Transverse colon (tissue), 4 donors: ENCODE measurements at regions of chr1 and their contacts with region 1.

Region 1: DNA sequence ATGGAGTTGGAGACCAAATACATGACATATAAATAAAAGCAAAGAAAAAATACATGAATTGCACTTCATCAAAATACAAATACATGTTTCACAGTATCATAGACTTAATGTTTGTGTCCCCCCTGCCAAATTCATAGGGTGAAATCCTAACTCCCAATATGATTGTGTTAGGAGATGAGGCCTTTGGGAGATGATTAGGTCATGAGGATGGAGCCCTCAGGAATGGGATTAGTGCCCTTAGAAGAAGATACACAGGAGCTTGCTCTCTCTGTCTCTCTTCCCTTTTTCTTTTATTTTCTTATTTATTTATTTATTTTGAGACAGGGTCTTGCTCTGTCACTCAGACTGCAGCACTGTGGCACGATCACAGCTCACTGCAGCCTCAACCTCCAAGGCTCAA is 26.0 kb upstream of the FAM131C start:
- DNase-seq: no peak
- H3K4me3 ChIP-seq: no peak overlapping the region
- H3K27ac ChIP-seq: no peak overlapping the region
- H3K4me1 ChIP-seq: no peaks in the 10 kb centered on the region
- H3K27me3 ChIP-seq: peaks cover 5% of the 10 kb centered on the region
- CTCF ChIP-seq: no peak
- EP300 ChIP-seq: no peak
- POLR2A ChIP-seq: no peak

Region 2: DNA sequence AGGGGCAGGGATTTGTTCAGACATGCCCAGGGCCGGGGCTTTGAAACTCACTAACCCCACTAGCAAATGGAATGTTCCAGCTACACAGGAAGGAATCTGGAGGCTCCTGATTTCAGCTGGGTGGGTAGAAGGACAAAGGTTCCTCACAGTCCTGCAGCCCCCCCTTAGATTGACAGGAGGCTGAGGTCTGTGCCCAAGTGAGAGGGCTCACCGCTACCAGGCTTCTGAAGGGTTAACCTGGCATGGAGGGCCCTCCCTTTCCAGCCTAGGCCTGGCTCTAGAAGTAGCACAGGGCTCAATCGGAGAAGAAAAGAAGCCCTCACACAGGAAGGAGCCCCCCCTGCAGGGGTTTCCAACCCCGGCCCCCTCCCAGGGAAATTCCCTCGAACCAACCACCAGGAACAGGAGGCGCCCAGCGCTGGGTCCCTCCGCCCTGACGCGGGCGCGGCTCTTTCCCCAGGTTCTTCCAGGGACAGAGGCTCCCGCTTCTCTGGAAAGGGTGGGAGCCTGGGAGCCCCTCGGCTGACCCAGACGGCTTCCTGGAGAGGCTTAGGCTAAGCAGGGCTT is 53.2 kb after region 1 on chr1:
- in situ Hi-C with region 1: no loop called
- intact Hi-C with region 1: loop called (anchors 2 kb)
- DNase-seq: peak; percentile 63
- H3K4me3 ChIP-seq: peak overlapping the region in 1 of 4 donors; percentile 80
- H3K27ac ChIP-seq: peak overlapping the region; percentile 85 to 95 (median 91)
- H3K4me1 ChIP-seq: peaks cover 21 to 51% (median 31%) of the 10 kb centered on the region in 4 donors
- H3K27me3 ChIP-seq: no peaks in the 10 kb centered on the region
- CTCF ChIP-seq: no peak
- EP300 ChIP-seq: no peak
- POLR2A ChIP-seq: no peak

Region 3: GRCh38 chr1:16386454-16387113 is 287.2 kb after region 1 on chr1:
- in situ Hi-C with region 1: no loop called
- intact Hi-C with region 1: no loop called
- DNase-seq: no peak
- H3K4me3 ChIP-seq: no peak overlapping the region
- H3K27ac ChIP-seq: peak overlapping the region; percentile 58 to 60 (median 58)
- H3K4me1 ChIP-seq: peaks cover 13 to 59% (median 34%) of the 10 kb centered on the region in 4 donors
- H3K27me3 ChIP-seq: no peaks in the 10 kb centered on the region
- CTCF ChIP-seq: no peak
- EP300 ChIP-seq: no peak
- POLR2A ChIP-seq: no peak

Region 4: DNA sequence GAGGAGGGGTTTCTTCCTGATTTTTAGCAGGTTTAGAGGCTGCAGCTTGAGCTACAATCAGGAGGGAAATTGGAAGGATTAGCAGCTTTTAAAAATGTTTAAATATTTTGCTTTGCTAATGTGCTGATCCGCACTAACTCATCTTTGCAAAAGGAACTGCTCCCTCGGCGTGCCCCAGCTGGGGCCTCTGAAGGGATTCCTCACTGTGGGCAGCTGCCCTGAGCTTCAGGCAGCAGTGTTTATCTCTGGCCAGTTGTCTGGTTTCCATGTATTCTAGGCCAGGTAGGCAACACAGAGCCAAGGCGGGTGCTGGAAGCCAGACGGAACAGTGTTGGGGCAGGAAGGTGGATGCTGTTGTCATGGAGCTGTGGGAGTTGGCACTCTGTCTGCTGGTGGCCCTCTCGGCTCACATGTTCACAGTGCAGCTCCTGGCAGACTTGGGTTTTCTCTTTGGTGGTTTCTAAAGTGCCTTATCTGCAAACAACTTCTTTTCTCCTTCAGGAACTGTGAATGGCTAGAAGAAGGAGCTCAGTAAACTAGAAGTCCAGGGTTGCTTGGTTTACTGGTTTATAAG is 360.0 kb after region 1 on chr1:
- in situ Hi-C with region 1: no loop called
- intact Hi-C with region 1: no loop called
- DNase-seq: no peak
- H3K4me3 ChIP-seq: no peak overlapping the region
- H3K27ac ChIP-seq: no peak overlapping the region
- H3K4me1 ChIP-seq: peaks cover 0 to 5% (median 0%) of the 10 kb centered on the region in 4 donors
- H3K27me3 ChIP-seq: no peaks in the 10 kb centered on the region
- CTCF ChIP-seq: no peak
- EP300 ChIP-seq: no peak
- POLR2A ChIP-seq: no peak

Region 5: DNA sequence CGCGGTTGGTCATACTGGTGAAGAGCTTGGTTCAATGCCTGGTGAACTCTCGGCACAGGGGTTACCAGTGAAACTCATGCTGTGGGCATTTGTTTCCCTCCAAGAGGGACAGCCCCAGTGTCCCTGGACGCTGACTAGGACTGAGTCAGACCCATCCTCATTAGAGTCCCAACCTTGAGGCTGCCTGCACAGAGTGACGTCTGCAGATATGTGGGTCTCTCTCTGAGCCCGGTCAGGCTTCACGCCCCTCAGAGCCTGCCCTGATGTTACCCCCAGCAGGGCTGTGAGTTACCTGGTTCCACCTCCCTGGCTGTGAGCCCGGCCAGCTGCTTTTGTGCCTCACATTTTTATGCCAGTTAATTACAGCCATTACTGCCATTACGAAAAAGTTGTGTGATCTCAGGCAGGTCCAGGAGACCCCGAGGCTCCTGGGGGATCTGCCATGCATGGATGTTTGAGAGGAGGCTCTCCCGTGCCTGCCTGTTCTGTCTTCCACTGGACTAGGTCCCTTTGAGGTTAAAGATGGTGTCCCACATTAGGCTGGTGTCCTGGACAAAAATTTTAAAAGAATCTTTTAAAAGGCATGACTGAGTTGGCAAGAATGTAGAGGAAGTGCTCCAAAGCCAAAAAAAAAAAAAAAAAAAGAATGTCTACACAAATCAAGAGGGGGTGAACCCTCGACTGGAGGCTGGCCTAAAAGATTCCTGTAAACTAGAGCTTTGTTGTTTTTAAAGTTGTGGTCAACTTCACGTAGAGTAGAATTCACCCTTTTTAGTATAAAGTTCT is 1068.9 kb after region 1 on chr1:
- in situ Hi-C with region 1: no loop called
- intact Hi-C with region 1: no loop called
- DNase-seq: no peak
- H3K4me3 ChIP-seq: no peak overlapping the region
- H3K27ac ChIP-seq: no peak overlapping the region
- H3K4me1 ChIP-seq: no peaks in the 10 kb centered on the region
- H3K27me3 ChIP-seq: peaks cover 10% of the 10 kb centered on the region
- CTCF ChIP-seq: no peak
- EP300 ChIP-seq: no peak
- POLR2A ChIP-seq: no peak